ENCODE measurements at regions of chr11 and their contacts with region 1.

Region 1: GRCh38 chr11:97995874-97996273 is 1024.9 kb upstream of the CNTN5 start:
- DNase-seq: no peak
- ATAC-seq: peak; percentile 67; the same call in 2 of the 3 replicates
- H3K4me3 ChIP-seq: no peak overlapping the region
- H3K27ac ChIP-seq: peak overlapping the region; percentile 49; the same call in 2 of the 3 replicates
- H3K4me1 ChIP-seq: peaks cover 0 to 4% of the 10 kb centered on the region in 2 experiments; a peak in 1 of 5 replicates
- H3K27me3 ChIP-seq: no peaks in the 10 kb centered on the region
- CTCF ChIP-seq: no peak
- EP300 ChIP-seq: no peak
- POLR2A ChIP-seq: no peak
- RAD21 ChIP-seq: no peak

Region 2: DNA sequence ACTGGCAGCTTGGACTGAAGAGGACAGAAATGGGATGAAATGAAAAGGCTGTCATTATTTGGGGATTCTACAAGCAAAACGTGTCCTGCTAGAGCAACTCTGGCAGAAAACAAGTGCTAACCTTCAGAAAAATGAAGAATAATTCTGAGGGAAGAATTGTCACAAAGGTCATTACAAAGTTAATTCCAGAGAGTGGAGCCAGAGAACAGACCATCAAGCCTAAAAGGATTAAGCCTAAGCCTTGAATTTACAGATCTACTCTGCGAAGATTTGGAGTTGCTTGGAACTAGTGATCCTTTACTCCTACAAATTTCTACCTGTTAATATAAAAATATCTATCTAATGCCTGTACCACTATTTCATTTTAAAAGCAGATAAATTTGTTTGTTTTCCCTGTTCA is 52.4 kb before region 1 on chr11:
- CTCF ChIA-PET with region 1: no interaction called
- POLR2A ChIA-PET with region 1: no interaction called
- in situ Hi-C with region 1: no loop called
- intact Hi-C with region 1: no loop called
- DNase-seq: no peak
- ATAC-seq: peak; percentile 81
- H3K4me3 ChIP-seq: no peak overlapping the region
- H3K27ac ChIP-seq: no peak overlapping the region
- H3K4me1 ChIP-seq: no peaks in the 10 kb centered on the region; a peak in 1 of 5 replicates
- H3K27me3 ChIP-seq: no peaks in the 10 kb centered on the region
- CTCF ChIP-seq: peak in 1 of 3 experiments; percentile 39; a peak in 2 of 6 replicates
- EP300 ChIP-seq: no peak
- POLR2A ChIP-seq: no peak
- RAD21 ChIP-seq: peak; percentile 57 to 82

Region 3: GRCh38 chr11:97965849-97966646 is 29.8 kb before region 1 on chr11:
- CTCF ChIA-PET with region 1: no interaction called
- POLR2A ChIA-PET with region 1: no interaction called
- in situ Hi-C with region 1: no loop called
- intact Hi-C with region 1: loop called (anchors 1 kb)
- DNase-seq: no peak
- ATAC-seq: no peak
- H3K4me3 ChIP-seq: no peak overlapping the region
- H3K27ac ChIP-seq: peak overlapping the region; percentile 98
- H3K4me1 ChIP-seq: peaks cover 10 to 38% of the 10 kb centered on the region in 2 experiments; a peak in 3 of 5 replicates
- H3K27me3 ChIP-seq: no peaks in the 10 kb centered on the region
- CTCF ChIP-seq: no peak
- EP300 ChIP-seq: no peak
- POLR2A ChIP-seq: no peak
- RAD21 ChIP-seq: no peak

Region 4: GRCh38 chr11:98289617-98290263 is 293.9 kb after region 1 on chr11:
- CTCF ChIA-PET with region 1: no interaction called
- POLR2A ChIA-PET with region 1: no interaction called
- in situ Hi-C with region 1: no loop called
- intact Hi-C with region 1: no loop called
- DNase-seq: no peak
- ATAC-seq: no peak
- H3K4me3 ChIP-seq: no peak overlapping the region
- H3K27ac ChIP-seq: no peak overlapping the region
- H3K4me1 ChIP-seq: no peaks in the 10 kb centered on the region; a peak in 1 of 5 replicates
- H3K27me3 ChIP-seq: no peaks in the 10 kb centered on the region
- CTCF ChIP-seq: no peak
- EP300 ChIP-seq: no peak
- POLR2A ChIP-seq: no peak
- RAD21 ChIP-seq: no peak